Testis (tissue), 5 donors: ENCODE measurements at regions of chr17 and their contacts with region 1.

Region 1: GRCh38 chr17:43760254-43760852 is 1.8 kb upstream of the SOST start:
- DNase-seq: peak; percentile 95
- H3K4me3 ChIP-seq: no peak overlapping the region
- H3K27ac ChIP-seq: no peak overlapping the region
- H3K4me1 ChIP-seq: peaks cover 7% of the 10 kb centered on the region
- H3K27me3 ChIP-seq: no peaks in the 10 kb centered on the region
- CTCF ChIP-seq: peak; percentile 94 to 97 (median 95)
- POLR2A ChIP-seq: no peak

Region 2: DNA sequence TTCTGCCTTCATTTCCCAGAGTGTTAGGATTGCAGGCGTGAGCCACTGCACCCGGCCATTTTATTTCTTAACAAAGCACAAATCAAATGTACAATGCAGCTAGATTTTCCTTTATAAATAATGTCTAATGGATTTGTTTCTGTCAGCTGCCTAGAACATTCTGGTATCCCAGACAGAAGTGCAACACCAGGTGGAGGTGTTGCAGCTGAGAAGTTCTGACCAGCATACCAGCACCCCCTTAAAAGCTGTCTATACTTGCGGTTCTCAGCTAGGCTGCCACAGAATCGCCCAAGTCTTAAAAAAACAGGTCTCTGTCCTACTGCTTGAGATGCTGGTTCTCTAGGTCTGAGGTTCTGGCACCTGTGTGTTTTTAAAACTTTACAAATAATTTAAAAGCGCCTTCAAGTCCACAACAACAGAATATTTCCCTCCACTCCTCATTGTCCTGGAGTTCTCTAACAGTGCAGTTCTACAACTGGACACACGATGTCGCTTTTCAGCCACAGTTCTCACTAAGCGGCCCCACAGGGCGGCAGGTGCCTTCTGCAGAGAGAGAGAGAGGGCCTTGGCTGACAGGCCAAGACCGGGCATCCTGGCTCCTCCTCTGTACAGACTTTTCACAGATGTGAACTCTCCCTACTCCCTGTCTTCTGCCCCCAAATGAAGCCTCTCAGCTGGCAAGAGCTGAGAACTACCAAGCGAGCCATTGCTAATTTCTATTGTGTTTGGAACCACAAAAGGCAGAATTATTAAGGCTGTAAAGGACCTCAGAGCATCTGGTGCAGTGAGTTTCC is 66.1 kb before region 1 on chr17:
- intact Hi-C with region 1: loop called (anchors 2 kb)
- DNase-seq: peak; percentile 90
- H3K4me3 ChIP-seq: no peak overlapping the region
- H3K27ac ChIP-seq: no peak overlapping the region
- H3K4me1 ChIP-seq: peaks cover 11% of the 10 kb centered on the region
- H3K27me3 ChIP-seq: no peaks in the 10 kb centered on the region
- CTCF ChIP-seq: peak; percentile 82 to 89 (median 88)
- POLR2A ChIP-seq: no peak